Heart left ventricle (tissue), 16 donors: ENCODE measurements at regions of chrX and their contacts with region 1.

Region 1: DNA sequence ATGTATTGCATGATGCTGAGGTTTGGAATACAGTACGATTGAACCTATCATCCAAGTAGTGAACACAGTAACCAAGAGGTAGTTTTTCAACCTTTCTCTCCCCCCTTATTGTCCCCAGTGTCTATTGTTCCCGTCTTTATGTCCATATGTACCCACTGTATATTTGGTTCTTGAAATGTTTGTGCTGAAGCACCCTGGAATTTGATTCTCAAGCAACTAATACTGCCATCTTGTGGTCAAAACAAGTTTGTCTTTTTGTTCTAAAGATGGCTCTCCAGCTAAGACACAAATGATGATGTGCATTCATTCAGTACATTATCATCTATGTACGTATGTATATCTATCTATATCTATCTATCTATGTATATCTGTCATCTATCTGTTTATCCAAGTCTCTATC is 33.5 kb upstream of the DCX start:
- DNase-seq: no peak
- ATAC-seq: peak in 1 of 4 donors; percentile 47
- H3K4me3 ChIP-seq: no peak overlapping the region
- H3K27ac ChIP-seq: no peak overlapping the region
- H3K4me1 ChIP-seq: no peaks in the 10 kb centered on the region
- H3K27me3 ChIP-seq: peaks cover 0 to 37% (median 0%) of the 10 kb centered on the region in 9 donors
- CTCF ChIP-seq: peak; percentile 34 to 69 (median 50)
- POLR2A ChIP-seq: no peak

Region 2: GRCh38 chrX:110442640-110443039 is 1002.8 kb before region 1 on chrX:
- intact Hi-C with region 1: loop called in 1 of 10 experiments (anchors 10 kb)
- DNase-seq: no peak
- ATAC-seq: no peak
- H3K4me3 ChIP-seq: no peak overlapping the region
- H3K27ac ChIP-seq: no peak overlapping the region
- H3K4me1 ChIP-seq: no peaks in the 10 kb centered on the region
- H3K27me3 ChIP-seq: peaks cover 0 to 68% (median 0%) of the 10 kb centered on the region in 9 donors
- CTCF ChIP-seq: no peak
- POLR2A ChIP-seq: no peak

Region 3: DNA sequence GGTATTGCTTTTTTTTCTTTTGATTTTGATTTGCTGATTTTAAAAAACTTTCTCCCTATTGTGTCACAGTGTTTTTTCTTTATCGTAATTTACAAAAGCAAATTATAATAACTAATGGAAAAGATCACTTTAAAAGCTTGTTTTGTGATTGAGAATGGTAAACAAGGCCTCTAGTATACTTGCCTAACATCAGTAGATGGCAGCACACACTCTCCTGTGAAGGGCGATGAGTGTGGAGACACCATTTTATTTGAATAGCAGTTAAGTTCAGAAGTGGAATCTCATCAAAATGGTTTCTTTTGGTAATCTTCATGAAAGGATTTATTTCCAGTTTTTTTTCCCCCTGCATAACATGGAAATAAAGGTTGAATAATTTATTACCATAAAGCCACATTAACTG is 277.2 kb before region 1 on chrX:
- intact Hi-C with region 1: loop called in 8 of 10 experiments (anchors 5 to 10 kb)
- DNase-seq: no peak
- ATAC-seq: no peak
- H3K4me3 ChIP-seq: no peak overlapping the region
- H3K27ac ChIP-seq: no peak overlapping the region
- H3K4me1 ChIP-seq: no peaks in the 10 kb centered on the region
- H3K27me3 ChIP-seq: peaks cover 0 to 8% (median 0%) of the 10 kb centered on the region in 9 donors
- CTCF ChIP-seq: peak in 1 of 12 donors; percentile 18
- POLR2A ChIP-seq: no peak

Region 4: GRCh38 chrX:111262096-111262495 is 183.4 kb before region 1 on chrX:
- intact Hi-C with region 1: loop called in 6 of 10 experiments (anchors 5 to 10 kb)
- DNase-seq: no peak
- ATAC-seq: no peak
- H3K4me3 ChIP-seq: no peak overlapping the region
- H3K27ac ChIP-seq: no peak overlapping the region
- H3K4me1 ChIP-seq: no peaks in the 10 kb centered on the region
- H3K27me3 ChIP-seq: peaks cover 0 to 52% (median 0%) of the 10 kb centered on the region in 9 donors
- CTCF ChIP-seq: no peak
- POLR2A ChIP-seq: no peak

Region 5: DNA sequence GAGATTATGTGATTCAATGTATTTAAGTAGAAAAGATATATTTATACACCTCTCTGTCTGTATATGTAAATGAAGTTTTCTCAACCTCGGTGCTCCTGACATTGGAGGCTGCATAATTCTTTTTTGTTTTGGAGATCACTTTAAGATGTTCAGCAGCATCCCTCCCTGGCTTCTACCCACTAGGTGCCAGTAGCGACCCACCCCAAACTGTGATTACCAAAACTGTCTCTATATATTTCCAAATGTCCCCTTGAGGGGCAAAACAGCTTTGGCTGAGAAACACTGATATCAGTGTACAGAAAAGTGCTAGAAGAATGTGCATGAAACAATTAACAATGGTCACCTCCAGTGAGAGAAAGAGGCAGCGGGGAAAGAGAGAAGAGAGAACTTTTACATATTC is 84.6 kb before region 1 on chrX:
- intact Hi-C with region 1: loop called in 3 of 10 experiments (anchors 5 to 10 kb)
- DNase-seq: no peak
- ATAC-seq: no peak
- H3K4me3 ChIP-seq: no peak overlapping the region
- H3K27ac ChIP-seq: no peak overlapping the region
- H3K4me1 ChIP-seq: no peaks in the 10 kb centered on the region
- H3K27me3 ChIP-seq: peaks cover 0 to 10% (median 0%) of the 10 kb centered on the region in 9 donors
- CTCF ChIP-seq: peak in 1 of 12 donors; percentile 18
- POLR2A ChIP-seq: no peak

Region 6: GRCh38 chrX:111646515-111646914 is 201.0 kb after region 1 on chrX:
- intact Hi-C with region 1: no loop called
- DNase-seq: no peak
- ATAC-seq: no peak
- H3K4me3 ChIP-seq: no peak overlapping the region
- H3K27ac ChIP-seq: no peak overlapping the region
- H3K4me1 ChIP-seq: no peaks in the 10 kb centered on the region
- H3K27me3 ChIP-seq: peaks cover 0 to 15% (median 0%) of the 10 kb centered on the region in 9 donors
- CTCF ChIP-seq: no peak
- POLR2A ChIP-seq: no peak